ENCODE measurements at regions of chr6 and their contacts with region 1.

Region 1: DNA sequence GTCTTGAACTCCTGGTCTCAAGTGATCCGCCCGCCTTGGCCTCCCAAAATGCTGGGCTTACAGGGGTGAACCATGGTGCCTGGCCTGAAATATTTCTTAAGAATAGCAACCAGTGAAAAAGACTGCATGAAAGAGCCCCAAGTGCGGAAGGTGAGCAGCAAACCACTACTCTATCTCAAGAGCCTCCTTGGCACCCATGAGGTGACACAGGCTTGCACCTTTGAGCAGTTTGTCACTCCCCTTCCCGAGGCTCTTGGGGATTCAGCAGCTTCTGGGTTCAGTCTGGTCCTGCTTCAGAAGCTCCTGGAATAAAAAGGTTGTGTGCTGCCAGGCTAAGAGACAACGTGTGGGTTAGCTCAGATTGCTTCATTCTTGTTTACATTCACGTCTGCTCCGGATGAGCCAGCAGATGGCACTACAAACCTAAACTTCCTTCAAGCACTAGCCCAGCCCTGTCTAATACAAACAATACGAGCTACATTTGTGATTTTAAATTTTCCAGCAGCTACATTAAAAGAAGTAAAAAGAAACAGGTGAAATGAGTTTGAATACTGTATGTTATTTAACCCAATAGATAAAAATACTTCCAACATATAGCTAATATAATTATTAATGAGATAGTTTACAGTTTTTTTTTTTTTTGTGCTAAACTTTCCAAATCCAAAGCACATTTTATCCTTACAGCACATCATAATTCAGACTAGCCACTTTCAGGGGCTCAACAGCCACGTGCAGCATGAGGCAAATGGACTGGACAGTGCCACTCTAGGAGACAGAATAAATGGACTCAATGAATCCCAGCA is 46.2 kb downstream of the GJA10 start:
- DNase-seq: peak; percentile 70 to 78
- H3K4me3 ChIP-seq: no peak overlapping the region
- H3K27ac ChIP-seq: peak overlapping the region; percentile 16 to 35
- H3K4me1 ChIP-seq: no peaks in the 10 kb centered on the region
- H3K27me3 ChIP-seq: no peaks in the 10 kb centered on the region
- CTCF ChIP-seq: peak; percentile 64 to 79 (median 68)
- POLR2A ChIP-seq: no peak

Region 2: GRCh38 chr6:90393232-90393884 is 452.9 kb after region 1 on chr6:
- intact Hi-C with region 1: loop called (anchors 10 kb)
- DNase-seq: peak; percentile 56 to 65
- H3K4me3 ChIP-seq: no peak overlapping the region
- H3K27ac ChIP-seq: no peak overlapping the region
- H3K4me1 ChIP-seq: no peaks in the 10 kb centered on the region
- H3K27me3 ChIP-seq: no peaks in the 10 kb centered on the region
- CTCF ChIP-seq: peak; percentile 66 to 80 (median 76)
- POLR2A ChIP-seq: no peak

Region 3: DNA sequence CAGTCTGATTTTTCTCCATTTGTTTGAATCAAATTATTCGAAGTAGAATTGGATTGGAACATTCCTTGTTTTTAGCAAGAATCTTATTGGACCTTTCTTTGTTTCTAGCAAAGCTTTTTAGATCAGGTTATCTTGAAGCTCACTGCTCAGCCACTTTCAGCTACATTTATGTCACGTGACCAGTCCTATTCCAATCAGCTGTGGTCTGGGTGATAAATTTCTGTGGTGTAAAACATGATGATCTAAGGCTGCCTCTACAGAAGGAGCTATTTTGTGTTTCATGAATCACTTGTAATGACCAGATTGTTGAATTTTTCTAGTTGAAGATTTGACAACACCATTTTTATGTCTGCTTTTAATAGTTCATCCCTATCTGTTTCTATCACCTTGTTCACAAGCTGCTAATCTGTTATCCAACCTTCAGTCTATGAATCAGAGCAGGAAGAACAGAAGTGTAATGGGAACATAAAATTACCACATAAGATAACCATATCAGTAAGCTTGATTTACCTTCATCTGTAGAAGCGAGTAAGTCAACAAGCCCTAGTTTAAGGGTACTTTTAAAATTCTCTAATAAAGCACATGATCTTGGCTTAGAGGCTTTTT is 747.5 kb after region 1 on chr6:
- intact Hi-C with region 1: no loop called
- DNase-seq: no peak
- H3K4me3 ChIP-seq: no peak overlapping the region
- H3K27ac ChIP-seq: no peak overlapping the region
- H3K4me1 ChIP-seq: no peaks in the 10 kb centered on the region
- H3K27me3 ChIP-seq: peaks cover 0 to 8% of the 10 kb centered on the region in 2 donors
- CTCF ChIP-seq: no peak
- POLR2A ChIP-seq: no peak